Caco-2 (cell line): ENCODE measurements at regions of chr1 and their contacts with region 1.

Region 1: DNA sequence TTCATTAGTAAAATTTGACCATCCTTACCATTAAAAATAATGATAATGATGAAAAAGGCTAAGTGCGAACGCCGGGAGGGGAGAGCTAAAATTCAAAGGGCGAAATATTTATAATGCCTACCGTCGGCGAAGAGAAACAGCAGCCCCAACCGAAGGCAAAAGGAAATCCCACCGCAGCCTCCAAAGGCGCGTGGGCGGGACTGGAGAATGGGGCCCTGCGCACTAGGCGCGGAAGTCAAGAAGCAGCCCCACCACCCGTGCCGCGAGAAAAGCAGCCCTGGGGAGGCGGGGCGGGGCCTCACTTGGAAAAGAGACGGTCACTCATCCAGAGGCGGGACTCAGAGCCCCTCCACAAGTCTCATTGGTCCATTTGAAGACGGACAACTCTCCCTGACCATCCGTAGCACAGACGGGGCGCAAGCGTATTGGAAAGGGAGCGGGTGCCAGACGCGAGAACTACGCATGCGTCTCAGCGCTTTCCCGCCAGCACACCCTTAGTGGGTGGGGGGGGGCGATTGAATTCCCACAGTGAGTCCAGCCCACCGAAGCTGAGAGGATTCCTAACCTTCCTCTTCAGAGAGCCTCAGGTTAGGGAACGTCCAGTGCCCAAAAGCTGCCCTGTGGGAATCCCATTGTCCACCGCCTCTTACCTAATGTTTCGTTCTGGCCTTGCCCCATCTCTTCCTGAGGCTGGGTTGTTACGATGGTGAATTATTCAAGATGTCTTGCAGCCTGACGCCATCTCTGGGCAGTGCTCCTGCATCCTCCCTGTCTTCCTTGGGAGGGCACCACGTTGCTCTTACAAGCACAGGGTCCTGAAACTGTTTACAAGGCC is 19.0 kb downstream of the MTX1 start:
- DNase-seq: peak; percentile 99
- H3K4me3 ChIP-seq: peak overlapping the region; percentile 62
- H3K4me3 Mint-ChIP-seq: peak overlapping the region; percentile 81
- H3K27ac Mint-ChIP-seq: peak overlapping the region; percentile 80
- H3K4me1 ChIP-seq: peaks cover 22% of the 10 kb centered on the region
- H3K4me1 Mint-ChIP-seq: peaks cover 25% of the 10 kb centered on the region
- H3K27me3 ChIP-seq: no peaks in the 10 kb centered on the region
- H3K27me3 Mint-ChIP-seq: no peaks in the 10 kb centered on the region
- CTCF ChIP-seq: no peak

Region 2: GRCh38 chr1:155208541-155209311 is 18.8 kb before region 1 on chr1 and contains the start of gene MTX1:
- CTCF ChIA-PET with region 1: interaction called, 10 read pairs
- POLR2A ChIA-PET with region 1: interaction called, 13 read pairs
- intact Hi-C with region 1: loop called (anchors 1 kb)
- DNase-seq: peak; percentile 86
- H3K4me3 ChIP-seq: peak within 1 kb of the TSS; percentile 91
- H3K4me3 Mint-ChIP-seq: peak within 1 kb of the TSS; percentile 80
- H3K27ac Mint-ChIP-seq: peak within 1 kb of the TSS; percentile 93
- H3K4me1 ChIP-seq: peaks cover 15% of the 10 kb centered on the region
- H3K4me1 Mint-ChIP-seq: peaks cover 16% of the 10 kb centered on the region
- H3K27me3 ChIP-seq: no peaks in the 10 kb centered on the region
- H3K27me3 Mint-ChIP-seq: no peaks in the 10 kb centered on the region
- CTCF ChIP-seq: no peak
- total RNA-seq, gene MTX1: 64.9 and 65.3 TPM in 2 replicates